ENCODE measurements at regions of chr11 and their contacts with region 1.

Region 1: GRCh38 chr11:33015621-33016551 is at the start of gene DEPDC7:
- DNase-seq: peak; percentile 79 to 98 (median 92)

Region 2: DNA sequence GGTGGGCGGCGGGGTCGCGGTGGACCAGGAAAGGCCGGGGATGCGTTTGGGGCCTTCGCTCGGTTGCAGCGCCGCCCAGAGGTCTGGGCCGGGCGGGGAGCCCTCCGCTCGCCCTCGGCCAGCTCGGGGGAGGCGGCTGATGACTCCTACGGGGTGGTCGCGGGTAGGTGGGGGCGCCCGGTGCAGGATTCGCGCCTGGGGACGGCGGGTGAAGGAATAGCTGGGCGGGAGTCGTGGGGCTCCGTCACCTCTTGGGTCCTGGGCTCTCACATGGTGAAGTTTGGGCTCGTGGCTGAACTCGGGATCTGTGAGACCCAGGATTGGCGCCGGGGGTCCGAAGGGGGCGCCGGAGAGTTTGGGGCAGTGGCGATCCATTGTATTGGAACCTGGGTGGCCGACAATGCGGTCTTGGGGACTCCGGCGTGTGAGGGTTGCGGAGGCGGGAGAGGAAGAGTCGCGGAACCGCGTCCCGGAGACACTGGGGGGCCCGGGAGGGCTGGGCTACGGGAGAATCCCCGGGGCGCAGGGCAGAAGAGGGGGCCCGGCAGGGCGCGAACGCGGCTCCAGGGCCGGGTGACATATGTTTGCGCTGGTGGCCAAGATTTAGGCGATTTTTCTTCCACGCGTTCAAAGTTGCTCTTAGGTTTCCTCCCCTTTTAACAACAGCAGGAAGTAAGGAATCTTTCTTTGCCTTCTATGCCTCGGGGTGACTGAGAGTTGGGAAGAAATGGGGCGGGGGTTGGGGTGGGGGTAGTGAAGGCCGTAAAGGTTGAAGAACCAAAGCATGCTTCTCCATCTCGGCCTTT is 122.3 kb before region 1 on chr11:
- intact Hi-C with region 1: loop called (anchors 10 kb)
- DNase-seq: peak in 9 of 10 donors; percentile 44 to 90 (median 48)

Region 3: DNA sequence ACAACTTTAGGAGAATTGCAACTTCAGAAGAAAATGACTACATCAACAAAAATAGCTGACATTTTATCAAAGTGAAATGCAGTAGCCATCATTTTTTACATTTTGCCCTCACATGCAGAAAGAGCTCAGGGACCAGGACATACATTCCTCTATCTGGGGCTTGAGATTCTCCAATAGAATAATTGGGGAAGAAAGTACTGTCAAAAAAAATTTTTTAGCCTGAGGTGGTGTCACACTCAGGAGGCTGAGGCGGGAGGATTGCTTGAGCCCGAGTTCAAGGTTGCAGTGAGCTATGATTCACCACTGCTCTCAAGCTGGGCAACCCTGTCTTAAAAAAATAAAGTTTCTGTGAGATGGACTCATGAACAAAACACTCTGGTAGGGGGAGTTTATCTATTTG is 32.4 kb before region 1 on chr11:
- intact Hi-C with region 1: no loop called
- DNase-seq: no peak

Measured in posterior cingulate gyrus (tissue), 11 donors.